ENCODE measurements at regions of chr5 and their contacts with region 1.

Region 1: DNA sequence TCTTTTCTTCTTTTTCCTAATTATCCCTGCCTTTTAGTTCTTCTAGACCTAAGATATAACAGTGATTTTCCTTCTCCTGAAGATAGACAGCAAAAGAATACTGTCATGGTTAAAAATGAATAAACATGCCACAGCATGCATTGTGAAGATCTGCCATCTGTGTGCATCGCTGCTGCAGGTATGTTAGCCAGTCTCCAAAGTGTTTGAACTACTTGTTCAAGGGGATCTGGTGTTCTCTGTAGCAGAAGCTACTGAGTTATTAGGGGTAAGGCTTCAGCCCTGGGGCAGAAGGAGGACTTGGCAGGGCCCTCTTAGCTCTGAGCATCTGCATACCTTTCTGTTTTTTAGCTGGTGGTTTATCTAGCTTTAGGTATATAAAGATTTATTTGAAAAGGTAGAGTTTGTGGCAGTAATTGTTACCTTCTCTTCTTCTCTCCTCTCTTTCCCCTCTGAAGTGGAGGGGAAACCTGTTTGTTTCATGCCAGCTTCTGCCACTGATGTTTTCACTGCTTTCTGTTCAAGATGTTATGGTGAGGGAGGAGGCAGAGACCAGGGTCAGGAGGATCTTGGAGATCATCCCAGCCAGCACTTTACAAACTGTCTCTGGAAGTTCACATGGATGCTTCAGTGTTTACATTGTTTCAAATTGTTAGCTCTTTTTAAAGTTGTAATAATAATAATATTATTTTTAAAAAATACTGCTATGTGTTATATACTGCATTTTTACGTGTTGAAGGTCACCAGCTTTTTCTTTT is 25.2 kb downstream of the GALNT10 start:
- DNase-seq: no peak
- ATAC-seq: no peak
- H3K4me3 ChIP-seq: no peak overlapping the region
- H3K4me3 Mint-ChIP-seq: no peak overlapping the region
- H3K27ac ChIP-seq: no peak overlapping the region
- H3K27ac Mint-ChIP-seq: peak overlapping the region; percentile 31 to 62
- H3K4me1 ChIP-seq: peaks cover 3 to 9% of the 10 kb centered on the region in 2 experiments
- H3K4me1 Mint-ChIP-seq: peaks cover 44 to 70% (median 57%) of the 10 kb centered on the region in 3 donors
- H3K27me3 ChIP-seq: no peaks in the 10 kb centered on the region
- H3K27me3 Mint-ChIP-seq: no peaks in the 10 kb centered on the region

Region 2: GRCh38 chr5:154049636-154050035 is 166.1 kb before region 1 on chr5:
- CTCF ChIA-PET with region 1: no interaction called
- POLR2A ChIA-PET with region 1: interaction called in 1 of 2 experiments, 11 read pairs
- DNase-seq: no peak
- ATAC-seq: no peak
- H3K4me3 ChIP-seq: no peak overlapping the region
- H3K4me3 Mint-ChIP-seq: no peak overlapping the region
- H3K27ac ChIP-seq: no peak overlapping the region
- H3K27ac Mint-ChIP-seq: no peak overlapping the region
- H3K4me1 ChIP-seq: peaks cover 0 to 13% of the 10 kb centered on the region in 2 experiments
- H3K4me1 Mint-ChIP-seq: peaks cover 49 to 54% (median 53%) of the 10 kb centered on the region in 3 donors
- H3K27me3 ChIP-seq: no peaks in the 10 kb centered on the region
- H3K27me3 Mint-ChIP-seq: no peaks in the 10 kb centered on the region

Region 3: DNA sequence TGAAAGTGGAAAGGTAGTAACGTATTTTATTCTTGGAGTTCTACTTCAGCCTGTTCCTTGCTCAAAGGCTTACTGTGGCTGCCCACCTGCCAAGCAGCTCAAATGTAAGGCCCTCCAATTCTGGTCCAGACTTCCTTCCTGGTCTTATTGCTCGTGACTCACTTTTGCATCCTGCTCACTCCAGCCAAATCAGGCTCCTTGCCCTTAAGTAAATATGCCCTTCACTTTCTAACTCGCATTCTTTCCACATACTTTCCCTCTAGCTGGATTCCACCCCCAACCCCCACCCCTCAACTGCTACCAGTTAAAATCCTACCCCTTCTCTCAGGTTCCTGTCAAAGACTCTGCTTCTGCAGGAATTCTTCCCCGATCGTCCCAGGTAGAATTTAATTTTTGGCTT is 71.4 kb after region 1 on chr5:
- CTCF ChIA-PET with region 1: no interaction called
- POLR2A ChIA-PET with region 1: no interaction called
- DNase-seq: no peak
- ATAC-seq: no peak
- H3K4me3 ChIP-seq: no peak overlapping the region
- H3K4me3 Mint-ChIP-seq: no peak overlapping the region
- H3K27ac ChIP-seq: no peak overlapping the region
- H3K27ac Mint-ChIP-seq: no peak overlapping the region
- H3K4me1 ChIP-seq: no peaks in the 10 kb centered on the region
- H3K4me1 Mint-ChIP-seq: peaks cover 17 to 30% (median 20%) of the 10 kb centered on the region in 3 donors
- H3K27me3 ChIP-seq: no peaks in the 10 kb centered on the region
- H3K27me3 Mint-ChIP-seq: no peaks in the 10 kb centered on the region

Measured in T-cell (primary cell).